HCT116 (cell line): ENCODE measurements at regions of chr19 and their contacts with region 1.

Region 1: DNA sequence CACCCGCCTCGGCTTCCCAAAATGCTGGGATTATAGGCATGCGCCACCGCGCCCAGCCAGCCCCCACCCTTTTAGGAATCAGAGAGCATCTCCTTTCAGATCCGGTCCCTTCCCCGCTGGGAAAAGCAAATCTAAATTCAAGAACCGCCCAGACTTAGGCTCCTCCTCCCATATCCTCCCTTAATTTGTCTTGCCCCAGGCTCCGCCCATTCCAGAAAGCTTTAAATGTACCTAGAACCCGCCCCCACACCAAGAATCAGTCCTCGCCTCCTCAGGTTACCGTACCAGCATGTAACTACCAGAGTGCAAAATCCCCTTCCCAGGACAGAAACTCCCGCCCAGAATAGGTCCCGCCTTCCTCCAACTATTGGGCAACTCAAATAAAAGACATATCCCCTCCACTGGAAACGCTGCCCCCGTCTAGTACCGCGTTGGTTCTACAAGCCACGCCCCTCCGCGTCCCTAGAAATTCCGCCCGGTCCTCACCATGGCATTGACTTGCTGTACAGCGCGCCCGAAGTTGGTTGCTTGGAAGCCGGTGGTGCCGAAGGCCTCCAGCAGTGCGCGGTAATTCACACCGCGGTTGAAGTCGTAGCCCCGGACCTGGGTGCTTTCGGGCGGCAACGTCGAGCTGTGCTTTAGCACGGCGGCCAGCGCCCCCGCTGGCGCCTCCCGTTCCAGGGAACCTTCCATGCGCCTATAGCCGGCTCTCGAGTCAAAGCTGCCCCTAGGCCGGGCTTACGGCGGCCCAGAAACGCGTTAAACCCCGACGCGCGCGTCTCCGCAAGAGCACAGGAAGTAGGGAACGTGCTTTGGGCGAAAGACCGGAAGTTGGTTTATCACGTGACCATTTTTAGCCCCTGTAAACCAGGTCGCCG is at the start of gene DHPS:
- DNase-seq: peak; percentile 98
- ATAC-seq: peak; percentile 82
- H3K4me3 ChIP-seq: peak within 1 kb of the TSS; percentile 79 to 98
- H3K27ac ChIP-seq: peak within 1 kb of the TSS; percentile 100
- H3K4me1 ChIP-seq: peaks cover 9 to 19% of the 10 kb centered on the region in 2 experiments; a peak in 3 of 4 replicates
- H3K27me3 ChIP-seq: no peaks in the 10 kb centered on the region
- CTCF ChIP-seq: no peak
- POLR2A ChIP-seq: peak; percentile 82
- RAD21 ChIP-seq: no peak
- total RNA-seq, gene DHPS: 134 TPM

Region 2: GRCh38 chr19:12666265-12667048 is 14.9 kb before region 1 on chr19 and contains the starts of genes MAN2B1 and WDR83:
- CTCF ChIA-PET with region 1: interaction called, 5 read pairs
- POLR2A ChIA-PET with region 1: interaction called, 4 read pairs
- RAD21 ChIA-PET with region 1: no interaction called
- intact Hi-C with region 1: loop called (anchors 1 kb)
- DNase-seq: no peak
- ATAC-seq: peak; percentile 81
- H3K4me3 ChIP-seq: peak within 1 kb of the TSS; percentile 61 to 84
- H3K27ac ChIP-seq: peak within 1 kb of the TSS; percentile 58
- H3K4me1 ChIP-seq: peaks cover 19 to 37% of the 10 kb centered on the region in 2 experiments
- H3K27me3 ChIP-seq: no peaks in the 10 kb centered on the region
- CTCF ChIP-seq: no peak
- POLR2A ChIP-seq: no peak
- RAD21 ChIP-seq: no peak
- total RNA-seq, gene MAN2B1: 48.3 TPM
- total RNA-seq, gene WDR83: 20.1 TPM

Region 3: GRCh38 chr19:12796146-12797071 is 115.1 kb after region 1 on chr19:
- CTCF ChIA-PET with region 1: interaction called, 7 read pairs
- POLR2A ChIA-PET with region 1: interaction called, 5 read pairs
- RAD21 ChIA-PET with region 1: no interaction called
- intact Hi-C with region 1: loop called (anchors 2 kb)
- DNase-seq: no peak
- ATAC-seq: peak; percentile 32
- H3K4me3 ChIP-seq: peak overlapping the region in 1 of 2 experiments; percentile 33; a peak in 1 of 4 replicates
- H3K27ac ChIP-seq: peak overlapping the region; percentile 70
- H3K4me1 ChIP-seq: peaks cover 29 to 68% of the 10 kb centered on the region in 2 experiments
- H3K27me3 ChIP-seq: no peaks in the 10 kb centered on the region
- CTCF ChIP-seq: peak in 2 of 3 experiments; percentile 93 to 94; a peak in 4 of 6 replicates
- POLR2A ChIP-seq: peak; percentile 0
- RAD21 ChIP-seq: no peak